Mucosa of descending colon (tissue), 3 donors: ENCODE measurements at regions of chr6 and their contacts with region 1.

Region 1: DNA sequence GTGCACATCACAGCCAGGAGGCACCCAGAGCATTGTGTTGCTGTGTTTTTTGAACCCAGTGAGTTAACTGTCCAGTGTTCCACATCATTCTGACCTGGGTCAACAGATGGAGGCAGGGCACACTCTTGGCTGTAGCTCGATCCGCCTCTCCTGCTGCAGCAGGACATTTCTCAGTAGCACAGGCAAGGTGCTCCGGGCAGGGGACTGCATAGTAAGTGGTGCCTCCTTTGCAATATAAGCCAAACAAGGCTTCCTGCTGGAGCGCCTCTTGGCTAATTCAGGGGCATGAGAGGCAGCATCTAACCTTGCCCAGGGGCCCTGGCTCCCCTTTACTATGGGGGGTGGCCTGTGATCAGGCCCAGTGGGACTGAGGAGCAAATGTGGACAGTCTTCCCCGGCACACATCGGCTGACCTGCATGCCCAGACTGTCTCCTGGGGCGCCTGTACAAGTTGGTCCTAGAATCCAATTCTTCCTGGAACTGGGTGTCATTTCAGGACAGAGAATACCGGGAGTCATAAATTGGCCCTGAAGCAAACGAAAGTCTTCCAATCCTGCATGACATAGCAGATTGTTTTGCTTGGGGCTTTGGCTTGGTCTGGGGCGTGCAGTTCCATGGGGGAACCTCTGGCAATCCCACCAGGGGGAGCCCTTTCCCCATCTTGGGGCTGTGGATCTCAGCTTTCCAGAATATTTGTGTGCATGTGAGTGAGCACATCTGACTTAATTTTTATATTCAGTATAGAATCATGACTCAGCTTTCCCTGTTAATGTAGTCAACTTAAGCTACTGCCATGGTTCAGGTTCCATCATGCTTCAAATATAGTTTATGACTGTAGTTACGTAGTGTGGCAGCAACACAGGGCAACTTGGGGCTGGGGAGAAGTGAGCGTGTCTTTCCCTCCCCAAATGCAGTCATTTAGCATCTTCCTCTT is 56.0 kb upstream of the DDR1 start:
- DNase-seq: peak; percentile 85 to 95 (median 92)
- ATAC-seq: peak; percentile 84
- H3K4me3 ChIP-seq: no peak overlapping the region
- H3K4me1 ChIP-seq: peaks cover 24% of the 10 kb centered on the region
- CTCF ChIP-seq: peak; percentile 86

Region 2: GRCh38 chr6:30700340-30700739 is 128.0 kb before region 1 on chr6:
- intact Hi-C with region 1: no loop called
- DNase-seq: peak in 1 of 3 donors; percentile 55
- ATAC-seq: peak; percentile 84
- H3K4me3 ChIP-seq: no peak overlapping the region
- H3K4me1 ChIP-seq: no peaks in the 10 kb centered on the region
- CTCF ChIP-seq: no peak

Region 3: DNA sequence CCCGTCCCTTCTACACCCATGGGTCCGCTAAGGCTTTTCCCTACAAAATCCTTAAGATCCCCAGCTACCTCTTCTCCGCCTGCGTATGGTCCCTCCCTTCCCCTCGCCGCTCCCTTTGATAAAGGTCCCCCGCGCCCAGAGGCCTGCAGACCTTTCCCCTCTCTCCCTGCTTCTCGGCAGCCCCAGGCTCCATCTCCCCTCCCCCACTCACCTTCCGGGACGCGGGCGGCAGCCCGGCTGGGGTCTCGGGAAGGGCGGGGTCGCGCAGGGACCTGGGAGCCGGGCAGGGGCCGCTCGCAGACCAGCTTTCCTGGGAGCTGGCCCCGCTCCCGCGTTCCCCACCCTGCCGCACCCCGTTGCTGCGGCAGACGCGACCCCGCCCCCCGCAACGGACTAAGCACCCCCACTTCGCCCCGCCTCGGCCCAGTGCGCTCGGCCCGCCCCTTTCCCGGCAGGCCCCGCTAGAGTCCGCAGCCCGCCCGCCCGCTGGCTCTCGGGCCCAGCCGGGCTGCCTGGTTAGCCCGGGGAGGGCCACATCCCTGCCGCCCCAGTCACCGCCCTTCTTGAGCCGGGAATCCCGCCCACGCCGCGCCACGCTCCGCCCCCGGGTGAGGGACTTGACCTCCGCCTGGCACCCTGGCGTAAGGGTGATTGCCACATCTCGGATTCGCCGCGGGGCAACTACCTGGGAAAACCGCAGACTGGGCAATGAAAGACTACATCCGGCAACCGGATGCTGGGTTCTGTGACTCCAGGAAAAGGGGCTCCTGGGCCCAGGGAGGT is 85.8 kb before region 1 on chr6 and contains the start of gene FLOT1:
- intact Hi-C with region 1: loop called in 1 of 2 experiments (anchors 10 kb)
- DNase-seq: peak; percentile 99 to 100 (median 99)
- ATAC-seq: peak; percentile 81
- H3K4me3 ChIP-seq: peak within 1 kb of the TSS; percentile 71
- H3K4me1 ChIP-seq: peaks cover 34% of the 10 kb centered on the region
- CTCF ChIP-seq: peak; percentile 7
- total RNA-seq, gene FLOT1: 133 to 175 (median 152) TPM

Region 4: GRCh38 chr6:30877419-30878371 is 49.4 kb after region 1 on chr6:
- intact Hi-C with region 1: loop called (anchors 5 kb)
- DNase-seq: peak; percentile 88 to 97 (median 92)
- ATAC-seq: peak; percentile 93
- H3K4me3 ChIP-seq: no peak overlapping the region
- H3K4me1 ChIP-seq: peaks cover 11% of the 10 kb centered on the region
- CTCF ChIP-seq: peak; percentile 80

Region 5: DNA sequence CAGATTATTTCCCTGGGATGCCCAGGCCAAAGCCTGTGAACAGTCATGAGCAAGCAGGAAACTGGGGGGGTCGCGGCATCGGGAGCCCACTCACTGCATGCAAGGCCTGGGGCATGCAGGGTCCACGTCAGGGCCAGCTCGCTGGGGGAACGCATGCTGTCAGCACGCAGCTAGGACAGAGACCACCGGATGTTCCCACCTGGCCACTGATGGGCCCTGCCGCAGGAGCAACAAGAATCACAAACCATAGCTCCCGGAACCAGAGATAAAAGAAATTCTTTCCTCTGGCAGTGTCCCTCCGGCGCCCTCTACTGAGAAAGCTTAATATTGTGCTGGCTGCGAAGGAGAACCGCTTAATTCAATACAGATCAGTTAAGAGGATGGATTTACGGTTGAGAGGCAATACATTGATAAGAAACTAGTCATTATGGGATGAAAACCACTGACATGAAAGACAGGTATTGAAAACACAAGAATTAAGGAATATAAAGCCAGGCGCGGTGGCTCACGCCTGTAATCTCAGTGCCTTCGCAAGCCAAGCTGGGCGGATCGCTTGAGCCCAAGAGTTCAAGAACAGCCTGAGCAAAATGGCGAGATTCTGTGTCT is 251.5 kb after region 1 on chr6:
- intact Hi-C with region 1: loop called in 1 of 2 experiments (anchors 10 kb)
- DNase-seq: peak in 2 of 3 donors; percentile 59 to 86
- ATAC-seq: peak; percentile 85
- H3K4me3 ChIP-seq: no peak overlapping the region
- H3K4me1 ChIP-seq: peaks cover 3% of the 10 kb centered on the region
- CTCF ChIP-seq: peak; percentile 53